Panc1 (cell line): ENCODE measurements at regions of chr19 and their contacts with region 1.

Region 1: GRCh38 chr19:2475702-2476450 is at the start of gene GADD45B:
- DNase-seq: peak; percentile 94
- ATAC-seq: peak; percentile 58
- H3K4me3 ChIP-seq: peak within 1 kb of the TSS; percentile 82 to 94
- H3K27ac ChIP-seq: peak within 1 kb of the TSS; percentile 87
- H3K4me1 ChIP-seq: peaks cover 7% of the 10 kb centered on the region
- H3K27me3 ChIP-seq: no peaks in the 10 kb centered on the region
- CTCF ChIP-seq: no peak
- total RNA-seq, gene GADD45B: 56.2 TPM

Region 2: DNA sequence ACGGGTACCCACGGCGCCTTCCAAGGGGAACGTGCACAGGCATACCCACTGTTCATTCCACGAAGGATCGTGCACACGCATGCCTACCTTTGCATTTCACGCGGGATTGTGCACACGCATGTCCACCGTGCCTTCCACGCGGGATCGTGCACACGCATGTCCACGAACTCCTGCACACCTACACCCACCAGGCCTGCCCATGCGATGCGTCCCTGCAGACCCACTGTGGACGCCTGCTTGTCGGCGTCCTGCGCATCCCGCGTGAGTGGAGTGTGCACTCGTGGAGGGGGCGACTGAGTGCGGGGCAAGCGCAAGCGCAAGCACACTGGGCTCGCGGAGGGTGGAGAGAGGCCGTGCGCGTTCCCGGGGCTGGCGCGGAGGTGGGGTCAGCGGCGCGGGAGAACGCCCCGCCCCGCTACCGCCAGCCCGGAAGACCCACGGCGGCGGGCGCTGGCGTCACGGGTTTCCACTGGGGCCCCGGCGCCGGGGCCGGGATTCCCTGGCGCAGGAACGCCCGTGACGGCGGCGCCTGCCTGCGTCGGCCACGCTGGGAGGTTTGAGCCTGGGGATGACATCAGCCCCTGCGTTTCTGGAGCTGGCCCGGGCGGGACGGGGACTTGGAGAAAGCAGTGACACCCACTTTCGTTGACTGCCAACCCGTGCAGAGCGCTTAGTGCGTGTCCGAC is 18.7 kb after region 1 on chr19:
- CTCF ChIA-PET with region 1: interaction called, 4 read pairs
- POLR2A ChIA-PET with region 1: interaction called, 14 read pairs
- in situ Hi-C with region 1: no loop called
- intact Hi-C with region 1: no loop called
- DNase-seq: no peak
- ATAC-seq: peak; percentile 80
- H3K4me3 ChIP-seq: peak overlapping the region; percentile 58 to 76
- H3K27ac ChIP-seq: peak overlapping the region; percentile 85
- H3K4me1 ChIP-seq: peaks cover 33% of the 10 kb centered on the region
- H3K27me3 ChIP-seq: no peaks in the 10 kb centered on the region
- CTCF ChIP-seq: no peak

Region 3: GRCh38 chr19:2543463-2544442 is 67.9 kb after region 1 on chr19:
- CTCF ChIA-PET with region 1: no interaction called
- POLR2A ChIA-PET with region 1: interaction called, 12 read pairs
- in situ Hi-C with region 1: no loop called
- intact Hi-C with region 1: loop called (anchors 10 kb)
- DNase-seq: no peak
- ATAC-seq: peak; percentile 76
- H3K4me3 ChIP-seq: peak overlapping the region in 1 of 2 experiments; percentile 20; a peak in 1 of 4 replicates
- H3K27ac ChIP-seq: peak overlapping the region; percentile 100
- H3K4me1 ChIP-seq: peaks cover 70% of the 10 kb centered on the region
- H3K27me3 ChIP-seq: no peaks in the 10 kb centered on the region
- CTCF ChIP-seq: no peak

Region 4: GRCh38 chr19:2561895-2562294 is 86.0 kb after region 1 on chr19:
- CTCF ChIA-PET with region 1: no interaction called
- POLR2A ChIA-PET with region 1: no interaction called
- in situ Hi-C with region 1: no loop called
- intact Hi-C with region 1: no loop called
- DNase-seq: no peak
- ATAC-seq: no peak
- H3K4me3 ChIP-seq: no peak overlapping the region
- H3K27ac ChIP-seq: no peak overlapping the region
- H3K4me1 ChIP-seq: peaks cover 9% of the 10 kb centered on the region
- H3K27me3 ChIP-seq: no peaks in the 10 kb centered on the region
- CTCF ChIP-seq: no peak

Region 5: GRCh38 chr19:2610637-2611482 is 135.0 kb after region 1 on chr19:
- CTCF ChIA-PET with region 1: interaction called, 6 read pairs
- POLR2A ChIA-PET with region 1: interaction called, 5 read pairs
- in situ Hi-C with region 1: no loop called
- intact Hi-C with region 1: loop called (anchors 2 kb)
- DNase-seq: no peak
- ATAC-seq: peak; percentile 93
- H3K4me3 ChIP-seq: peak overlapping the region; percentile 17 to 45; a peak in 3 of 4 replicates
- H3K27ac ChIP-seq: peak overlapping the region; percentile 86
- H3K4me1 ChIP-seq: peaks cover 14% of the 10 kb centered on the region
- H3K27me3 ChIP-seq: no peaks in the 10 kb centered on the region
- CTCF ChIP-seq: peak; percentile 92

Region 6: DNA sequence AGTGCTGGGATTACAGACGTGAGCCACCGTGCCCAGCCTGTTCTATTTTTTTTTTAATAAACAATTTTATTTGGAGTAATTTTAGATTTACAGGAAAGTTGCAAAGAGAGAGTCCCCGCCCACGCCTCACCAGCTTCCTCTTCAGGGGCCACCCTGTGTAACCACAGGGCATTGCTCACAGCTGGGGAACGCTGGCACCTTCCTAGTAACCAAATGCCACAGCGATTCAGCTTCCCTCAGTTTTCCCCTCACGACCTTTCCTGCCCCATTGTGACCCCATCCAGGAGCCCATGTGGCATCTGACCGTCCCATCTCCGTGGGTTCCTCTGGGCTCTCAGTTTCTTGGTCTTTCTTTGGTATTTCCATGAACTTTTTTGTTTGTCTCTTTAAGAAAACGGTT is 142.7 kb after region 1 on chr19:
- CTCF ChIA-PET with region 1: interaction called, 9 read pairs
- POLR2A ChIA-PET with region 1: interaction called, 17 read pairs
- in situ Hi-C with region 1: no loop called
- intact Hi-C with region 1: no loop called
- DNase-seq: no peak
- ATAC-seq: peak; percentile 63; the same call in 1 of the 2 replicates
- H3K4me3 ChIP-seq: no peak overlapping the region
- H3K27ac ChIP-seq: peak overlapping the region; percentile 68
- H3K4me1 ChIP-seq: peaks cover 24% of the 10 kb centered on the region
- H3K27me3 ChIP-seq: no peaks in the 10 kb centered on the region
- CTCF ChIP-seq: no peak

Region 7: DNA sequence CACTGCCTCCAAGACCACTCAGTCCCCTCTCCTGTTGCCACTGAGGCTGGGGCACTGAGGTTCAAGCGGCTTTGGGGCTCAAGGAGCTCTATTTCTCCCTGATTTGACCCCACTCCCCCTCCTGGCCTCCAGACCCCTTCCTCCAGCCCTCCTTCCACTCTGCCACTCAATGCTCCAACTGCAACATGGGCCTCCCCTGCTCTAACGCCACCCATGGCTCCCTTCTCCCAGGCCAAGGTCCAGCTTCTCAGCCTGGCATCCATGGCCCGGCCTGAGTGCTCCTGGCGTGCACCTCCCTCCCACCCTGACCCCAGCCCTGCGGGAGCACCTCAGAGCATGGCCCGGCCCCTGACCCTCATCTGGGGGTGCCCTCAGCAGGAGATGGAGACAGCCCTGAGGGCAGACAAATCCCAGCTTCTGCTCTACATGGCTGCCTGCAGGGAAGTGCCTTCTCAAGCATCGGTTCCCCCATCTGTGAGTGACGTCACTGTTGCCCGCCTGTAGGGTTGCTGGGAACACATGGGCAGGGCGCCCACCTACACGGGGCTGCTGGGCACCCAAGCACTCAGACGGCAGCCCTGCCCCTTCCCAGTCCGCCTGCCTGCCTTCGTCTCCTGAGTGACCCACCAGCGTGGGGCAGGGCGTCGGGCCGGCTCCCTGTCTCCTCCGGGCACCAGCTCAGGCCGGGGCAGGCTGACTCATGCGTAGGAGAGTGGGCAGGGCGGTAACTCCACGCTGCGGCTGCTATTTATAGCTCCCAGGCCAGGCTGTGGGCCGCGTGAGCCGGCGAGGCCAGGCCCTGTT is 246.9 kb after region 1 on chr19:
- CTCF ChIA-PET with region 1: no interaction called
- POLR2A ChIA-PET with region 1: no interaction called
- in situ Hi-C with region 1: no loop called
- intact Hi-C with region 1: no loop called
- DNase-seq: no peak
- ATAC-seq: peak; percentile 79
- H3K4me3 ChIP-seq: no peak overlapping the region
- H3K27ac ChIP-seq: 0 out of 2 replicates have a peak overlapping the region, but pooled peaks have one; percentile 23
- H3K4me1 ChIP-seq: peaks cover 15% of the 10 kb centered on the region
- H3K27me3 ChIP-seq: no peaks in the 10 kb centered on the region
- CTCF ChIP-seq: no peak